Gastrocnemius medialis (tissue), 4 donors: ENCODE measurements at regions of chr13 and their contacts with region 1.

Region 1: DNA sequence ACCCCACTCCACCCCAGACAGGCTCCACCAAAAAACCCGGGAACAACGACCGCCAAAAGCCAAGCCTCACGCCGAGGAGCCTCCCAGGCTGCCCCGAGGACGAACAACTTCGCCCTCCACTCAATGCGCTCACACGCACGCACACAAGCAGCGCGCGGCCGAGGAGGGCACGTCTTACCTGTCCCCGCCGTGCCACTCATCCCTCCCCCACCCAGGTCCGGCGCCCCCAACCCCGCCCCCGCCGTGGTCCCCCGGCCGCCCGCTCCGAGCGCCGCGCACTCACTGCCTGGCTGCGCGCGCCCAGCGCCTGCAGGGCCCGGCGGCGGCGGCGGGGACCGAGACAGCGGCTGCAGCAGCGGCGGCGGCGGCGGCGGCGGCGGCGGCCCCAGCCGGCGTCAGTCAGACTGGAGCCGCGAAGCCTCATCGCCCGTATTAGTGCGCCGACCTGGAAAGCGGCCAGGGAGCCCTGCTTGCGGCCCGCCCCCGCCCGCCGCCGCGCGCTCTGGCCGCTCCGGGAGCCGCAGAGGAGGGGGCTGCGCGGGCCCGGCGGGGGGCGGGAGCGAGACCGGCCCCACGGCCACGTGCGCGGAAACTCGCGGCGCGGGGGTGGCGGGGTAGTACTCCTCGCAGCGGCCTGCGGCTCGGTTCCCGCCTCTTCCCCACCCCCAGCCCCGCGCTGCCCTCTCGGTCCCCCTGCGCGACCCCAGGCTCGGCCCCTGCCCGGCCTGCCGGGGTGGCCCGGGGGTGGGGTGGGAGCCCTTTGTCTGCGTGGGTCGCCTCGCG is at the start of gene SMAD9:
- DNase-seq: peak; percentile 11 to 76
- ATAC-seq: peak; percentile 74 to 83
- H3K4me3 ChIP-seq: peak within 1 kb of the TSS; percentile 69 to 79 (median 72)
- H3K27ac ChIP-seq: peak within 1 kb of the TSS; percentile 64 to 86 (median 71)
- H3K4me1 ChIP-seq: peaks cover 8 to 21% of the 10 kb centered on the region in 2 donors
- H3K27me3 ChIP-seq: no peaks in the 10 kb centered on the region
- CTCF ChIP-seq: no peak
- POLR2A ChIP-seq: peak in 1 of 2 donors; percentile 39
- total RNA-seq, gene SMAD9: 2.2 to 14.9 (median 6.5) TPM

Region 2: GRCh38 chr13:36818804-36819738 is 101.0 kb before region 1 on chr13 and contains the start of gene RFXAP:
- in situ Hi-C with region 1: no loop called
- intact Hi-C with region 1: loop called (anchors 2 kb)
- DNase-seq: peak; percentile 76 to 85
- ATAC-seq: peak; percentile 94 to 95
- H3K4me3 ChIP-seq: peak within 1 kb of the TSS; percentile 82 to 92 (median 84)
- H3K27ac ChIP-seq: peak within 1 kb of the TSS; percentile 78 to 84 (median 82)
- H3K4me1 ChIP-seq: peaks cover 10 to 16% of the 10 kb centered on the region in 2 donors
- H3K27me3 ChIP-seq: no peaks in the 10 kb centered on the region
- CTCF ChIP-seq: peak in 2 of 5 experiments; percentile 15 to 30
- POLR2A ChIP-seq: peak; percentile 50 to 52
- total RNA-seq, gene RFXAP: 0.71 to 3.0 (median 2.2) TPM

Region 3: DNA sequence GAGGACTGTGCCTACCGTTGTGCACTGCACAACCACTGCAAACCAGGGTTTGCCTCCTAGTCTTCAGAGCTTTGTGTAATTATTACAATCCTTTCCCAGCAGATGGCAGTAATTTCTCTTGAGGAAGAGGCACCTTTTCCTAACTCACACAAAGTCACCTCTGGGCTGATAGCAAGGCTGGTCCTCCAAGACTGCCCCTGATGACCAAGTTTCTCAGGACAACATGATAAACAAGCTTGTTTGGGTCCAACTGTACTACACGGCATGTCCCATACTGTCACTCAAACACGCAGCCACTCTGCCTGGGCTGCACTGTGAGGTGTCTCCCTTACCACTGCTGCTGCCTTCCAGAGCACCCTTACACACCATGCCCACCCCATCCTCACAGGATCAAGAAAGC is 61.7 kb before region 1 on chr13:
- in situ Hi-C with region 1: no loop called
- intact Hi-C with region 1: loop called (anchors 2 kb)
- DNase-seq: no peak
- ATAC-seq: peak; percentile 30 to 77
- H3K4me3 ChIP-seq: no peak overlapping the region
- H3K27ac ChIP-seq: no peak overlapping the region
- H3K4me1 ChIP-seq: peaks cover 0 to 3% of the 10 kb centered on the region in 2 donors
- H3K27me3 ChIP-seq: no peaks in the 10 kb centered on the region
- CTCF ChIP-seq: peak in 4 of 5 experiments; percentile 11 to 41 (median 26)
- POLR2A ChIP-seq: no peak

Region 4: GRCh38 chr13:36882829-36883390 is 37.1 kb before region 1 on chr13:
- in situ Hi-C with region 1: no loop called
- intact Hi-C with region 1: loop called (anchors 2 kb)
- DNase-seq: no peak
- ATAC-seq: no peak
- H3K4me3 ChIP-seq: no peak overlapping the region
- H3K27ac ChIP-seq: peak overlapping the region in 2 of 4 donors; percentile 34 to 59
- H3K4me1 ChIP-seq: peaks cover 5 to 16% of the 10 kb centered on the region in 2 donors
- H3K27me3 ChIP-seq: no peaks in the 10 kb centered on the region
- CTCF ChIP-seq: no peak
- POLR2A ChIP-seq: no peak

Region 5: DNA sequence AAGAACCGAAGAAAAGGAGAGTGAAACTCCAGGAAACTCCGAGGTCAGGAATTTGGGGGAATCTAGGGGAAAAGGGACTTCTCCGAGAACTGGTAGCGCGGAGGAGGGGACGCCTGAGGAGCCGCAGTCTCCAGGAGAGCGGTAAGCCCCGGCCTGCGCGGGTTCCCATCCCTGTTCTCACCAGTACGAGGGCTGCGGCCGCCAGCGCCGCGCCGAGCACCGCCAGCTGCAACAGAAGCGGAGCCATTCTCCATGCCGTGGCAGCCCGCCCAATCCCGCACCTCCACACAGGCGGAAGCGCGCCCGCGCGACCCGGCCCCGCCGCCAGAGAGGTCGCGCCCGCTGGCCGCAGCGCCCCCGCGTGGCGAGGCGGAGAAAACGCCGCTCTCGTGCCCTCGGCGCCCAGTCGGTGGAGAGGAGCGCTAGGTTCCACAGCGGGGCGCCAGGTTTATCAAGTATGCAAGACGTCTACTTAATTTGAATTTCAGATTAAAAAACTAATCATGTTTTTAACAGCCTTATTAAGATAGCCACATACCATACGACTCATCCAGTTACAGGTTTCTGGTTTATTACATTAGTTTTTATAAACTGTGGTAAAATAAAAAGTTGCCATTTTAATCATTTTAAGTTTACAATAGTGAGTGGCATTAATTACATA is 79.2 kb after region 1 on chr13 and contains the start of gene ALG5:
- in situ Hi-C with region 1: no loop called
- intact Hi-C with region 1: loop called (anchors 2 kb)
- DNase-seq: peak; percentile 70 to 84
- ATAC-seq: peak; percentile 84 to 87
- H3K4me3 ChIP-seq: peak within 1 kb of the TSS; percentile 82 to 97 (median 91)
- H3K27ac ChIP-seq: peak within 1 kb of the TSS; percentile 90 to 97 (median 94)
- H3K4me1 ChIP-seq: peaks cover 21% of the 10 kb centered on the region in 2 donors
- H3K27me3 ChIP-seq: no peaks in the 10 kb centered on the region
- CTCF ChIP-seq: peak; percentile 82 to 99 (median 94)
- POLR2A ChIP-seq: peak; percentile 30 to 43
- total RNA-seq, gene ALG5: 9.8 to 20.9 (median 13.2) TPM